Activated naive CD4-positive, alpha-beta T cell treated with anti-CD3 and anti-CD28 coated beads for 36 hours (primary cell): ENCODE measurements at regions of chr15 and their contacts with region 1.

Region 1: GRCh38 chr15:62060113-62060895 is at the start of gene VPS13C:
- DNase-seq: peak; percentile 90
- H3K4me3 Mint-ChIP-seq: peak within 1 kb of the TSS; percentile 88
- H3K27ac Mint-ChIP-seq: peak within 1 kb of the TSS; percentile 86
- H3K4me1 Mint-ChIP-seq: peaks cover 49% of the 10 kb centered on the region
- H3K27me3 Mint-ChIP-seq: no peaks in the 10 kb centered on the region
- total RNA-seq, gene VPS13C: 37.4 to 38.0 TPM

Region 2: DNA sequence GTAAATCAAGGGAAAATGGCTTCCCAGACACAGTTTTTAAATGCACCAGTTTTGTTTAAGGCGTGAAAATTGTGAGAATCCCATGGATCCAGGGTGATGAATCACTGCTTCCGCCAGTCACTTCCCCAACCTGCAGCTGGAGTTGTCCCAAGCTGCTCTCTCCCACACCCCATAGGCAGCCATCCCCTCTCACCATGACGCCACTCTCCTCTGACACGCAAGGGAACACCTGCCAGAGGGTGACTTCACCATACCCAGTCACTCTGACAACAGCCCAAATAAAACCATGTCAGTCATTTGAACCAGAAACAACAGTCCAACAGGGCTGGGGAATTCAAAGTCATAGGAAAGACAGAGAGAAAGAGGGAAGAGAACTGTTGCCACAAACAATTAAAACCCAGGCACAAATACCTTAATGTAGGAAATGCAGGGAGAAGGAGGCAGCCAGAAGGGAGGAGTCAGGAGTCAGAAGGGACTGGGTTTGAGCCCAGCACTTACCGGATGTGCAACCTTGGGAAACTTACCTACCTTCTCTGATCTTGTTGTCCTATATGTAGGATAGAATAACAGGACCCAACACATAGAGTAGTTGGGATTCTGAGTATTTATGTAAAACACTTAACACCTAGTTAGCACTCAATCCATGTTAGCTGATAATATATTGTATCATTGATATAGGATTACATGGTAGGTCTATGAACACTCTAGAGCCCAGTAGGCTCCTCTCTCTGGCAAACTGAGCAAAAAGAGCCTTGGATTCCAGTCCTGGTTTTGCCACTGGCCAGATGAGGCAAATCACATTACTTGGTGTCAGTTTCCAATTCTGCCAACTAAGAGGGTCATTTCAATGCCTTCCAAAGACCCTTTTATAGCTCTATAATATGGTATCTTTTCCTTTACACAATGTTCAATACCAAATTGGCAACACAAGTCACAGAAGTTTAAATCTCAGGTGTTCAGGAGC is 1255.0 kb before region 1 on chr15:
- CTCF ChIA-PET with region 1: no interaction called
- intact Hi-C with region 1: loop called (anchors 10 kb)
- DNase-seq: no peak
- H3K4me3 Mint-ChIP-seq: no peak overlapping the region
- H3K27ac Mint-ChIP-seq: no peak overlapping the region
- H3K4me1 Mint-ChIP-seq: peaks cover 74% of the 10 kb centered on the region
- H3K27me3 Mint-ChIP-seq: no peaks in the 10 kb centered on the region

Region 3: DNA sequence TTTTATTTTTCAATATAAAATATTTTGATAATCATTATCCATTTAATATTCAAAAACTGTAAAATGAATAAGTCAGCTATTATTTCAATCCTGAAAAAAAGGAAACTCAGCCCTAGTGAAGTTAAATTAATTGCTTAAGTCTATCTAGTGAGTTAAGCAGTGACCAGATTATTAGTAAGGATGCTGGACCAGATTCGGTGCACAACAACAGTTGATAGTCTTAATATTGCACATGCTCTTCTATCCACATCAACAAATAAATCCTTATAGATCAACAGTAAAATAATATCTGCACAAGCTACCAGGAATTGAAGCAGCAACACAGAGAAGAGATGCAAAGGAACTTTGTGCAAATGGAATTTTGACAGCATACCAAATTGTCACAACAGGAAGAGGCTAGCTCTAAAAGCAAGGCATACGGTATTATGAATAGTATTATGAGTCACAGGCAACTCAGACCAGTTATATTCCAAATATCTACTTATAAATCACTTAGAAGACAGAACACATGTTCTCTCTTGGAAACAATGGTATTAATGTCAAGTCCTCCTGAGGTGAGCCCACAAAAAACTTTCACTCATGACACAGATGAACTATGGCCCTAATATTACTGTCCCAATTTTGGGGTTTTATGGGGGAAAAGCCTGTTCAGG is 24.9 kb before region 1 on chr15:
- CTCF ChIA-PET with region 1: no interaction called
- intact Hi-C with region 1: no loop called
- DNase-seq: no peak
- H3K4me3 Mint-ChIP-seq: no peak overlapping the region
- H3K27ac Mint-ChIP-seq: no peak overlapping the region
- H3K4me1 Mint-ChIP-seq: peaks cover 8% of the 10 kb centered on the region
- H3K27me3 Mint-ChIP-seq: no peaks in the 10 kb centered on the region

Region 4: GRCh38 chr15:62046078-62046743 is 14.1 kb before region 1 on chr15:
- CTCF ChIA-PET with region 1: interaction called, 7 read pairs
- intact Hi-C with region 1: loop called (anchors 2 kb)
- DNase-seq: no peak
- H3K4me3 Mint-ChIP-seq: peak overlapping the region; percentile 5
- H3K27ac Mint-ChIP-seq: peak overlapping the region; percentile 0
- H3K4me1 Mint-ChIP-seq: peaks cover 24% of the 10 kb centered on the region
- H3K27me3 Mint-ChIP-seq: no peaks in the 10 kb centered on the region

Region 5: DNA sequence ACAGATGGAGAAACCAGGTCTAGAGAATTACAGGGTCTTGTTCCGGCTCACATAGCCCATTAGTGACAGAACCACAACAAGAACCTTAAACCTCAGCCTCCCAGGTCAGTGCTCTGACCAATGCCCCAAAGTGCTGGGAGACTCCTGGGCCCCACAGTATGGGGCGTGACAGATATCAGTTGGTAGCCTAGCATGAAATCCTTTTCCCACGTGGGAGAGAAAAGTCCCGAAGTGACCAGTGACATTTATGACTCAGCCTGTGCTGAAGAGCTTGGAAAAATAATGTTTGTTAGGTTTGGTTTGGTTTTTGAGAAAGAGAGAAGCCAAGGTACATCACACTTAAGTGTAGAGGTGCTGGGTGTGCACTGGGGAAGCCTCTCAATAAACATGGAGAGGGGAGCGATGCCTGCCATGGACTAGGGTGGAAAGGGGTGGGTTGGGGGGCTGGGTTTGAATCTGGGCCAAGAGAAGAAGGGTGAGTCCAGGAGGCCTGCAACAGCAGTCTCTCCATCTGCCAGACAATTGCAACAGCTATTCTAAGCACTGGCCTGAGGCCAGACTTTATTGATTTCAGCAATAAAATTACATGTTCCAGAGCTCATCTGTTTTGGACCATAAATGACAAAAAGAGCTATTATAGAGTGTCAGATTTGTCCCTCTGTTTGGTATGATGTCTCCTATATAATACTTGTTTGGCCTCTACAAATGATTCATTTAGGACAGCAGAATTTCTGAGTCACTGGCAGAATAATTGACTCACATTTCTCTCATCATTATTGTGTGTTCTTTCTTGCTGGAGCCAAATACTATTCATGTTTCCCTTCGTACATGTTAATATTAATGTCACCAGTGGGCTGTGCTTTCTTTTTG is 49.9 kb after region 1 on chr15:
- CTCF ChIA-PET with region 1: no interaction called
- intact Hi-C with region 1: loop called (anchors 2 kb)
- DNase-seq: no peak
- H3K4me3 Mint-ChIP-seq: no peak overlapping the region
- H3K27ac Mint-ChIP-seq: peak overlapping the region; percentile 57
- H3K4me1 Mint-ChIP-seq: peaks cover 16% of the 10 kb centered on the region
- H3K27me3 Mint-ChIP-seq: peaks cover 12% of the 10 kb centered on the region

Region 6: GRCh38 chr15:62119227-62119864 is 59.0 kb after region 1 on chr15:
- CTCF ChIA-PET with region 1: no interaction called
- intact Hi-C with region 1: loop called (anchors 2 kb)
- DNase-seq: peak; percentile 53
- H3K4me3 Mint-ChIP-seq: peak overlapping the region; percentile 23
- H3K27ac Mint-ChIP-seq: peak overlapping the region; percentile 83
- H3K4me1 Mint-ChIP-seq: peaks cover 43% of the 10 kb centered on the region
- H3K27me3 Mint-ChIP-seq: peaks cover 4% of the 10 kb centered on the region